HCT116 (cell line): ENCODE measurements at regions of chr7 and their contacts with region 1.

Region 1: GRCh38 chr7:45863715-45864114 is 9.2 kb downstream of the CCDC201 start:
- DNase-seq: no peak
- ATAC-seq: peak; percentile 77
- H3K4me3 ChIP-seq: no peak overlapping the region
- H3K27ac ChIP-seq: no peak overlapping the region
- H3K4me1 ChIP-seq: no peaks in the 10 kb centered on the region
- H3K27me3 ChIP-seq: 0 out of 2 replicates have a peak, but pooled peaks cover 9% of the 10 kb centered on the region
- CTCF ChIP-seq: peak; percentile 56 to 80 (median 58)
- POLR2A ChIP-seq: no peak
- RAD21 ChIP-seq: 0 out of 2 replicates have a peak, but pooled peaks have one; percentile 25

Region 2: DNA sequence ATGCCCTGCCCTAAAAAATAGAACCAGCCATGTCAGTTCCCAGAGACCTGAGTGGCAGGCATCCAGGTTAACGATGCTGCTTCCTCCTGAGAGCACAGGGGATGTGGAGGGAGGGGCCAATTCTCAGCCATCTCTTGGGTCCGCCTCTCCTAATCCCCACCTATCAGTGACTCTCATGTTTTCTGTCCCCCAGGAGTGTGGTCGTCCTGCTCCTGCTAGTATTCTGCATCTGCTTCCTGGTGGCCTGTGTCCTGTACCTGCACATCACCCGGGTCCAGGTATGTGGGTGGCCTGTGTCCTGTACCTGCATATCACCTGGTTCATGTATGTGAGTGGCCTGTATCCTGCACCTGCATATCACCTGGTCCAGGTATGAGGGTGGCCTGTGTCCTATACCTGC is 184.2 kb before region 1 on chr7:
- CTCF ChIA-PET with region 1: no interaction called
- POLR2A ChIA-PET with region 1: no interaction called
- RAD21 ChIA-PET with region 1: no interaction called
- intact Hi-C with region 1: loop called (anchors 5 kb)
- DNase-seq: no peak
- ATAC-seq: peak; percentile 27; the same call in 1 of the 2 replicates
- H3K4me3 ChIP-seq: no peak overlapping the region
- H3K27ac ChIP-seq: no peak overlapping the region
- H3K4me1 ChIP-seq: no peaks in the 10 kb centered on the region
- H3K27me3 ChIP-seq: peaks cover 34% of the 10 kb centered on the region
- CTCF ChIP-seq: no peak
- POLR2A ChIP-seq: no peak
- RAD21 ChIP-seq: no peak

Region 3: GRCh38 chr7:46494026-46494425 is 630.3 kb after region 1 on chr7:
- CTCF ChIA-PET with region 1: no interaction called
- POLR2A ChIA-PET with region 1: no interaction called
- RAD21 ChIA-PET with region 1: no interaction called
- intact Hi-C with region 1: no loop called
- DNase-seq: no peak
- ATAC-seq: no peak
- H3K4me3 ChIP-seq: no peak overlapping the region
- H3K27ac ChIP-seq: no peak overlapping the region
- H3K4me1 ChIP-seq: peaks cover 3 to 10% of the 10 kb centered on the region in 2 experiments; a peak in 2 of 4 replicates
- H3K27me3 ChIP-seq: no peaks in the 10 kb centered on the region
- CTCF ChIP-seq: no peak
- POLR2A ChIP-seq: no peak
- RAD21 ChIP-seq: no peak